ENCODE measurements at regions of chr2 and their contacts with region 1.

Region 1: DNA sequence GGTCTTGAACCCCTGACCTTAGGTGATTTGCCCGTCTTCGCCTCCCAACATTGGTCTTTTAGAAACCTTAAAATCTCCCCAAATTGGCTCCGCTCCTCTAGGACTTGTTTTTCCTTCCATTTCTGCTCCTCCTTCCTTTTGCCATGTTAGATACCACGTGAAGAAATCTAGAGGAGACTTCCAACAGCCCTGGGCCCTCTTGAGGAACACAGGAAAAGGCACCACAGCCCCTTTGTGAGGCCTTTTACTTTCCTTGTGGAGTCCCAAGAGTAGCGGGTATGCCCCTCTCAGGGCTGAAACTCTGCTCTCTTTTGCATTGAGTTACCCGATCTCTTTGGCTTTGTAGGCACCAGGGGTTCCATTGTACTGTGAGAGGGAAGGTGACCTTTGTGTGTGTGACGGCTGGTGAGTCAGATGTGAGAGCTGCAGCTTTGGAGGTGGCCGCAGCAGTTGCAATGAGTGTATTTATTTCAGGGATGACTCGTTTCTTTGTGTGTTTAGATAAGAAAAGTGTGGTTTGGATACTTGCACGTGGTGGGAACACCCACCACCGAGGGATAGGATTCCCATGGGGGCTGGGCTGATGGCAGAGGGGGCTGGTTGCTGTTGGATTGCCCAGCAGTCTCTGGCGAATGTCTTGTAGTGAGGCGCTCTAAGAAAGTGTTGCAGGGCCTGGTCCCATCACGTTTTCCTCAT is 218.4 kb upstream of the HS6ST1 start:
- DNase-seq: peak; percentile 70
- ATAC-seq: peak; percentile 90
- H3K4me3 Mint-ChIP-seq: no peak overlapping the region
- H3K27ac Mint-ChIP-seq: no peak overlapping the region
- H3K4me1 Mint-ChIP-seq: peaks cover 14% of the 10 kb centered on the region
- H3K27me3 Mint-ChIP-seq: peaks cover 9% of the 10 kb centered on the region

Region 2: DNA sequence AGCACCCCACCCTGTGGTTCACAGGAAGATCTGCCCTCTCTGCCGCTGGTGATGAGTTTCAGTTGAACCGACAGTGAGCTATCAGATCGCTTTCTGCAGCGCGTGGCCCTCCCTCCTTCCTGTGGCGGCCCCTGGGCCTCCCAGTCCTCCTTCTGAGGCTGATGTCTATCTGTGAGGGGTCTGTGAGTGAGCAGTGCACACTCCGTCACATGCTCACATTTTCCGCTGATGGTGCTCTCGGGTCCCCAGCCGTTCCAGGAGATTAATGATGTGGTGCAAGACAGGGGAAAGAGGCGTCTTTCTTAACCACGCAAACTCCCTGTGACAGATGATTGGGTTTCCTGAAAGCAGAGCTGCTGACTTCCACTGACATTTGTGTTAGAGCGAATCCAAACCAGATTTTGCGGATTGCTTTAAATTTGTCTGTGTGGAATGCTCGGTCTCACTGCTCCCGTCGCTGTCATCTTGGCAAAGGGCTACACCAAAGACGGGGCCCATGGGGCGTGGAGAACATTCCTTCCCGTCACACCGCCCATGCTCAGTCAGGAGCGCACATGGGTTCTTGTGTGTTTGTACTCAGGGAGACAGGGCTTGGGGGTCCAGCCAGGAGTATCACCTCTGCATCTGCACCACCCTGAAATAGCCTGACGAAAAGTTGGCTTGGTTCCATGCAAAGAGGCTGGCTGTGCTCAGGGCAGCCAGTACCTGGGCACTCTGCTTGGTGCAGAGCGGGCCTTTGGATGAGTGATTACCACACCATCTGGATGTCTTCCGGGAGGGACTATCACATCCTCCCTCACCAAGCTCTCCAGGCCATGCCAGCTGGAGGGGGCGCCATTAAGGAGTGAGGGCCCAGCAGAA is 63.7 kb before region 1 on chr2:
- CTCF ChIA-PET with region 1: no interaction called
- POLR2A ChIA-PET with region 1: no interaction called
- intact Hi-C with region 1: loop called in 1 of 2 experiments (anchors 2 kb)
- DNase-seq: peak; percentile 76
- ATAC-seq: peak; percentile 94
- H3K4me3 Mint-ChIP-seq: peak overlapping the region; percentile 10
- H3K27ac Mint-ChIP-seq: peak overlapping the region; percentile 86
- H3K4me1 Mint-ChIP-seq: peaks cover 11% of the 10 kb centered on the region
- H3K27me3 Mint-ChIP-seq: peaks cover 18% of the 10 kb centered on the region

Region 3: DNA sequence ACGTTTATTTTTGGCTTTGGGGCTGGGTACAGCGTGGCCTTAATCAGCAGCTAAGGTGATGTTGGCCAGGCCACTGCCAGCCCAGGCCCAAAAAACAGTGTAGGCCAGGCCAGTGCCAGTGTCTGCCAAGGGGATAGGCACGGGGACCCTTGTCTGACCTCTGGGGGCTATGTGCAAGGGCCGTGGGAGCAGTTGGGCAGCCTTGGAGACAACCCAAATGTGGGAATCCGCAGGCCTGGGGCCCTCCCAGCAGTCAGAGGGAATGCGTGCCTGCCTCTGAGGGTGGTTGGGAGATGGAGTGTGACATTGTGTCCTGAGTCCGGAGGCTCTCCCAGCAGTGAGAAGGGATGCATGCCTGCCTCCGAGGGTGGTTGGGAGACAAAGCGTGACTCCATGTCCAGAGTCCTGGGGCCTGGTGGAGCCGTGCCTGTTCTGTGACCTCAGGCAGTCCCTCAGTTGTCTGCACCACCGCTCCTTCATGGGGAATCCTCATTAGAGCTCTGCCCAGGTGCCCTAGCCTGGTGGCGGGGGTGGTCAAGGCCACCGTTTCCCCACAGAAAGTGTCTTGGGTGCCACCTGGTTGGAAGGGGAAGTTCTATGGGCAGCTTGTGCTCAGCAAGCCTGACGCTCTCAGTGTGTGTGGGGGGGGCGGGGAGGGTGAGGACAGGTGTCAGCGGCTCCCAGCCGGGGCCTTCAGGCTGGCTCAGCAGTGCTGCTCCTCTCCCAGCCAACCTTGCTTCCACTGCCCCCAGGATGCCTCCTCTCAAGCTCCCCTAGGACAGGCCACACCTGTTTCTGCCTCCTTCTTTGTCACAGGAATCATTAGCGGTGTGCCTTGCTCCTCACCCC is 33.0 kb before region 1 on chr2:
- CTCF ChIA-PET with region 1: no interaction called
- POLR2A ChIA-PET with region 1: no interaction called
- intact Hi-C with region 1: no loop called
- DNase-seq: no peak
- ATAC-seq: no peak
- H3K4me3 Mint-ChIP-seq: no peak overlapping the region
- H3K27ac Mint-ChIP-seq: no peak overlapping the region
- H3K4me1 Mint-ChIP-seq: no peaks in the 10 kb centered on the region
- H3K27me3 Mint-ChIP-seq: peaks cover 2% of the 10 kb centered on the region

Region 4: DNA sequence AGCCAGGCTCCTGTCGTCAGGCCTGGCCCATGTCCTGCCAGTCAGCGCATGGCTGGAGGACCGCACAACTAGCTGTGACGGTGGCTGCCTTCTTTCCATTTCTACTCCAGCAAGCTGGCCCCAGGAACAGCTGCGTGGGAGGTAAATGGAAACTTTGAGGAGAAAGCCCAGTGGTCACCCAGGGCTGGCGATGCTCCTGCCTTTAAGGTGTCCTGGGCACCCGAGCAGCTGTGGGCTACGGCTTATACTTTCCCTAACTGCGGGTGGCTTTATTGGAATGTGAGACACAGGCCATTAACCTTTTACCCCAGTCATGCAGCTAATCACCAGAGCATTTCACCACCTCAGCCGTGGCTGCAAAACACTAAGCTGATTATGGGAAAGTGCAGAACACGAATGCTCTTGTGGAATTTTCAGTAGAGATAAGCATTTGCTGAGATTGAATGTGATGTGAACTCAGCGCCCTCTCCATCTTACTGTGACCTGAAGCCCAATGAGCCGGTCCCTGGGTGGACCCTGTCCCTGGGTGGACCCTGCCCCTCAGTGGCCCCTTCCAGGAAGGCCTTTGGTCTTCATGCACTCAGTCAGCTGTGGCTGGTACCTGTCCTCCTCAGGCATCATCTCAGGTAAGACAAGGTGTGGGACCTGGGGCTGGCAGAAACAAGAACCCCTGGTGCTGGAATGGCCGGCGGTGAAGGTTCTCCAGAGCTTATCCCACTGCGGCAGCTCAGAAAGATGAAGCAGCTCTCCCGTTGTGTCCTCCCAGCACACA is 57.0 kb after region 1 on chr2:
- CTCF ChIA-PET with region 1: no interaction called
- POLR2A ChIA-PET with region 1: no interaction called
- intact Hi-C with region 1: no loop called
- DNase-seq: no peak
- ATAC-seq: no peak
- H3K4me3 Mint-ChIP-seq: no peak overlapping the region
- H3K27ac Mint-ChIP-seq: no peak overlapping the region
- H3K4me1 Mint-ChIP-seq: no peaks in the 10 kb centered on the region
- H3K27me3 Mint-ChIP-seq: peaks cover 2% of the 10 kb centered on the region

Region 5: DNA sequence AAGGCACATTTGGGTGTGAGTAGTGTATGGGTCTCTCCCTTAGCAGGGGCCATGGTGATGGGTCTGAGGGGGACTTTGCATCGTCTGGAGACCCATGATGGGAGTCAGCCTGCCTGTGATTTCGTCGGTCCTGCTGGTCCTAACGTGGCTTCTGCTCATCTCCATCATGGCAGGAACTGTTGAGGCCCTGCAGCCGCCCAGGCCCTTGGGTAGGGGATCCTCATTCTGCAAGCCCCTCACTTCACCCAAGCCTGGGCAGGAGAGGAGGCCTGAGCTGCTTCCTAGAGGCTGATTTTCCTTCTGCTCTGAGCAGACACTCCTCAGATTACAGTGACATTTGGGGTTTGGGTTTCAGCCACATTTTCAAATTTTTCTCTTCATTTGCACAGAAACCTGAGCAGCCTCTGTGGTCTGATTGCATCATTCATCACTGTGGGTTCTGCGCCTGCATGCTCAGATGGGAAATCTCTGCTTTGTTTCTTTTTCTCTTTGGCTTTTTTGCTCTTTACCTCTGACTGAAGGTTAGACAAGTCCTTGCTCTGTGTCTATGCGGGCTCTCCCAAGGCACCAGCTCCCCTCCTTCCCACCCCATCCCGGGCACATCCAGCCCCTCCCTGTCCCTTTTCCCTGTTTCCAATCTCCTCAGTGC is 86.8 kb after region 1 on chr2:
- CTCF ChIA-PET with region 1: no interaction called
- POLR2A ChIA-PET with region 1: no interaction called
- intact Hi-C with region 1: loop called in 1 of 2 experiments (anchors 5 kb)
- DNase-seq: peak; percentile 72
- ATAC-seq: peak; percentile 81
- H3K4me3 Mint-ChIP-seq: peak overlapping the region; percentile 42
- H3K27ac Mint-ChIP-seq: peak overlapping the region; percentile 76
- H3K4me1 Mint-ChIP-seq: peaks cover 18% of the 10 kb centered on the region
- H3K27me3 Mint-ChIP-seq: peaks cover 2% of the 10 kb centered on the region